B cell (primary cell): ENCODE measurements at regions of chr5 and their contacts with region 1.

Region 1: GRCh38 chr5:134101686-134102439 is 12.6 kb upstream of the TCF7 start:
- DNase-seq: peak; percentile 82
- ATAC-seq: peak; percentile 53
- H3K4me3 ChIP-seq: no peak overlapping the region
- H3K4me3 Mint-ChIP-seq: peak overlapping the region; percentile 34
- H3K27ac ChIP-seq: peak overlapping the region; percentile 76 to 88
- H3K27ac Mint-ChIP-seq: peak overlapping the region; percentile 96
- H3K4me1 ChIP-seq: peaks cover 31 to 47% of the 10 kb centered on the region in 2 donors
- H3K4me1 Mint-ChIP-seq: peaks cover 46% of the 10 kb centered on the region
- H3K27me3 ChIP-seq: no peaks in the 10 kb centered on the region
- H3K27me3 Mint-ChIP-seq: no peaks in the 10 kb centered on the region
- CTCF ChIP-seq: peak; percentile 86

Region 2: GRCh38 chr5:133460172-133460758 is 641.6 kb before region 1 on chr5:
- CTCF ChIA-PET with region 1: no interaction called
- POLR2A ChIA-PET with region 1: no interaction called
- intact Hi-C with region 1: no loop called
- DNase-seq: peak; percentile 25
- ATAC-seq: no peak
- H3K4me3 ChIP-seq: no peak overlapping the region
- H3K4me3 Mint-ChIP-seq: no peak overlapping the region
- H3K27ac ChIP-seq: no peak overlapping the region
- H3K27ac Mint-ChIP-seq: no peak overlapping the region
- H3K4me1 ChIP-seq: no peaks in the 10 kb centered on the region
- H3K4me1 Mint-ChIP-seq: no peaks in the 10 kb centered on the region
- H3K27me3 ChIP-seq: no peaks in the 10 kb centered on the region
- H3K27me3 Mint-ChIP-seq: no peaks in the 10 kb centered on the region
- CTCF ChIP-seq: peak; percentile 55

Region 3: GRCh38 chr5:134004592-134005375 is 97.1 kb before region 1 on chr5 and contains the start of gene VDAC1:
- CTCF ChIA-PET with region 1: interaction called, 4 read pairs
- POLR2A ChIA-PET with region 1: interaction called, 3 read pairs
- intact Hi-C with region 1: loop called (anchors 1 kb)
- DNase-seq: peak; percentile 91
- ATAC-seq: peak; percentile 85
- H3K4me3 ChIP-seq: peak within 1 kb of the TSS; percentile 61 to 87 (median 82)
- H3K4me3 Mint-ChIP-seq: peak within 1 kb of the TSS; percentile 95
- H3K27ac ChIP-seq: peak within 1 kb of the TSS; percentile 74 to 95
- H3K27ac Mint-ChIP-seq: peak within 1 kb of the TSS; percentile 95
- H3K4me1 ChIP-seq: peaks cover 17 to 33% of the 10 kb centered on the region in 2 donors
- H3K4me1 Mint-ChIP-seq: peaks cover 44% of the 10 kb centered on the region
- H3K27me3 ChIP-seq: no peaks in the 10 kb centered on the region
- H3K27me3 Mint-ChIP-seq: no peaks in the 10 kb centered on the region
- CTCF ChIP-seq: no peak
- total RNA-seq, gene VDAC1: 60.7 and 63.4 TPM in 2 replicates

Region 4: DNA sequence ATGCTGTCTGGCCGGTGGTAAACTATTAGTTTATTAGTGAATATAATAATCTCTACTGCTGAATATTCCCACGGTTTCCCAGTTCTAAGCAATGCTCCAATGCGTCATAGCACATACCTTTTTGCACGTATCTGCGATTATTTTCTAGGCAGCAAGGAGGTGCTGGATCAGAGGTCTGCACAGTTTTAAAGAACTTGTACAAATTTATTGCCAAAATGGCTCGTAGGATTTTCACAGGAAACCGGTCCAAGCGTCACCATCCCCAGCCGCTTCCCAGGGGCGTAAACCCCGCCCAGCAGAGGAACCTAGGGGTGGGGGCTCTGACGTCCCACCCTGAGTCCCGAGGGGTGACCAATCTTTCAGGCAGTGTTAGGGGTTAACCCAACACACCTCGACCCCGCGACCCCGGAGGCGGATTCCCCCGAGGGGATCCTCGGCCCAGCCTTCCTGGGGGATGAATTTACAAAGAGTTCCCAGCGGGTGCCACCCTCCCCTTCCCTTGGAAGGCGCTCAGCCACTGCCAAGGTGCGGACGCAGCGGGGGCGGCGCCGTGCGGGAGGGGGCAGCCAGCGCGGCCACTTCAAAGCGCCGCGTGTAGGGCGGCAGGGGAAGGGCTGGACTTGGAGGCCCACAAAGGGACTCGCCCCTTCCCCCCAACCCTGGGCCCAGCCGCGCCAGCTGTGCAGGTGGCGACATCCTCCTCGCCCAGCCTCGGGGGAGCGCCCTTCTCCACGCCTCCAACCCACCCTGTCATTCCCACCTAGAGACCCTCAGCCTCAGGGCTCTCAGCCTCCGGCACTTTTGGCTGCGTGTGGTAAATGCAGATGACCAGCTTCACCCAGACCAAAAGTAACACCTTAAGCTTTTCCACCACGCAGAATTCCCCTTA is 30.9 kb before region 1 on chr5:
- CTCF ChIA-PET with region 1: interaction called, 16 read pairs
- POLR2A ChIA-PET with region 1: interaction called, 4 read pairs
- intact Hi-C with region 1: no loop called
- DNase-seq: peak; percentile 36
- ATAC-seq: peak; percentile 33
- H3K4me3 ChIP-seq: peak overlapping the region in 4 of 5 experiments; percentile 26 to 56 (median 38)
- H3K4me3 Mint-ChIP-seq: peak overlapping the region; percentile 81
- H3K27ac ChIP-seq: no peak overlapping the region
- H3K27ac Mint-ChIP-seq: peak overlapping the region; percentile 60
- H3K4me1 ChIP-seq: peaks cover 12 to 13% of the 10 kb centered on the region in 2 donors
- H3K4me1 Mint-ChIP-seq: peaks cover 5% of the 10 kb centered on the region
- H3K27me3 ChIP-seq: peaks cover 0 to 31% (median 12%) of the 10 kb centered on the region in 4 experiments
- H3K27me3 Mint-ChIP-seq: peaks cover 32% of the 10 kb centered on the region
- CTCF ChIP-seq: no peak

Region 5: GRCh38 chr5:134113902-134114875 is 12.3 kb after region 1 on chr5 and contains the start of gene TCF7:
- CTCF ChIA-PET with region 1: interaction called, 84 read pairs
- POLR2A ChIA-PET with region 1: no interaction called
- intact Hi-C with region 1: loop called (anchors 1 kb)
- DNase-seq: peak; percentile 86
- ATAC-seq: peak; percentile 89
- H3K4me3 ChIP-seq: peak within 1 kb of the TSS; percentile 64 to 84 (median 82)
- H3K4me3 Mint-ChIP-seq: peak within 1 kb of the TSS; percentile 90
- H3K27ac ChIP-seq: peak within 1 kb of the TSS in 1 of 2 donors; percentile 36
- H3K27ac Mint-ChIP-seq: peak within 1 kb of the TSS; percentile 78
- H3K4me1 ChIP-seq: peaks cover 13 to 32% of the 10 kb centered on the region in 2 donors
- H3K4me1 Mint-ChIP-seq: peaks cover 19% of the 10 kb centered on the region
- H3K27me3 ChIP-seq: peaks cover 0 to 38% (median 16%) of the 10 kb centered on the region in 4 experiments
- H3K27me3 Mint-ChIP-seq: peaks cover 14% of the 10 kb centered on the region
- CTCF ChIP-seq: no peak
- total RNA-seq, gene TCF7: 58.8 and 61.1 TPM in 2 replicates

Region 6: DNA sequence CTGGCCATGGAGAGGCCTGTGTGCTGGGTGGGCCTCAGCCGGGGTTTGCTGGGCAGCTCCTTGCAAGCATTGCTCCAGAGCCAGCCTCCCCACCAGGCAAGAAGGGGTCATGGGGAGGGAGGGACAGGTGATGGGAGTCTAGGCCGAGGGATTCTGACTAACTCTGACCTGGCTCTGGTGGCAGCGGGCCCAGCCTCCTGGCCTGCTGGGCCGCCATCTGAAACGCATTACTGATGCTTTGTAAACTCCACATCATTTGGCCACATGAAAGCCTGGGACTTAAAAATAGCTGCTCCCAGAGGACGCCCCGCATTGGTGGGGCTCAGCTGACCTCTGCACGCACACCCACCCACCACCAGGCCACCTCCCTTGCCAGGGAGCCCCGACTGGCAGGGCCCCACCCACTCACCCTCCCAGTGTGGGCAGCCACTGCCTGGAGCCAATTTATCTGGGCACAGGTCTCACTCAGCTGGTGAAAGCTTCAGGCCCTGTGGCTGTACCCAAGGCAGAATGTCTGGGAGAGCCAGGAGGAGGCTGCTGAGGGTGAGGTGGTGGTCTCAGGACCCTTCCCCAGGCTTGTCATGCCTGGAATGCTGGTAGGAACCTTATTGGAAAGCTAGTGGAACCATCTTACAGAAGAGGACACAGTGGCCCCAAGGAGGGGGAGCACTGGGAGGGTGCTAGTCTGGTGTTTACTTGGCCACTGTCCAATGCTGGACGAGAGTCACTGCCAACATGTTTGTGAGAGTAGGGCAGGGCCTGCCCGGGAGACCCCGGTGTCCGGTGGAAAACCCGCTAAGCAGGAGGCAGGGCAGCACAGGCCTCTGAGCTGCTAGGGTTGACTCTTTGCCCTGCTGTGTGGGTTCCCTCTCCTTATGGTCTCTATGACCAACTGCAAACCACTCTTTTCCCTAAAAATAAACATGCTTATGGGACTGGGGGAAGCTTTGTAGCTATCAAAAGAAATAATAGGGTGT is 23.5 kb after region 1 on chr5:
- CTCF ChIA-PET with region 1: interaction called, 10 read pairs
- POLR2A ChIA-PET with region 1: interaction called, 9 read pairs
- intact Hi-C with region 1: no loop called
- DNase-seq: no peak
- ATAC-seq: no peak
- H3K4me3 ChIP-seq: no peak overlapping the region
- H3K4me3 Mint-ChIP-seq: no peak overlapping the region
- H3K27ac ChIP-seq: peak overlapping the region; percentile 28 to 55
- H3K27ac Mint-ChIP-seq: peak overlapping the region; percentile 59
- H3K4me1 ChIP-seq: peaks cover 33 to 72% of the 10 kb centered on the region in 2 donors
- H3K4me1 Mint-ChIP-seq: peaks cover 54% of the 10 kb centered on the region
- H3K27me3 ChIP-seq: no peaks in the 10 kb centered on the region
- H3K27me3 Mint-ChIP-seq: no peaks in the 10 kb centered on the region
- CTCF ChIP-seq: no peak

Region 7: GRCh38 chr5:134140530-134141201 is 38.8 kb after region 1 on chr5:
- CTCF ChIA-PET with region 1: no interaction called
- POLR2A ChIA-PET with region 1: interaction called, 16 read pairs
- intact Hi-C with region 1: loop called (anchors 1 kb)
- DNase-seq: peak; percentile 77
- ATAC-seq: peak; percentile 73
- H3K4me3 ChIP-seq: no peak overlapping the region
- H3K4me3 Mint-ChIP-seq: no peak overlapping the region
- H3K27ac ChIP-seq: no peak overlapping the region
- H3K27ac Mint-ChIP-seq: peak overlapping the region; percentile 69
- H3K4me1 ChIP-seq: peaks cover 5 to 34% of the 10 kb centered on the region in 2 donors
- H3K4me1 Mint-ChIP-seq: peaks cover 33% of the 10 kb centered on the region
- H3K27me3 ChIP-seq: no peaks in the 10 kb centered on the region
- H3K27me3 Mint-ChIP-seq: no peaks in the 10 kb centered on the region
- CTCF ChIP-seq: peak; percentile 89

Region 8: DNA sequence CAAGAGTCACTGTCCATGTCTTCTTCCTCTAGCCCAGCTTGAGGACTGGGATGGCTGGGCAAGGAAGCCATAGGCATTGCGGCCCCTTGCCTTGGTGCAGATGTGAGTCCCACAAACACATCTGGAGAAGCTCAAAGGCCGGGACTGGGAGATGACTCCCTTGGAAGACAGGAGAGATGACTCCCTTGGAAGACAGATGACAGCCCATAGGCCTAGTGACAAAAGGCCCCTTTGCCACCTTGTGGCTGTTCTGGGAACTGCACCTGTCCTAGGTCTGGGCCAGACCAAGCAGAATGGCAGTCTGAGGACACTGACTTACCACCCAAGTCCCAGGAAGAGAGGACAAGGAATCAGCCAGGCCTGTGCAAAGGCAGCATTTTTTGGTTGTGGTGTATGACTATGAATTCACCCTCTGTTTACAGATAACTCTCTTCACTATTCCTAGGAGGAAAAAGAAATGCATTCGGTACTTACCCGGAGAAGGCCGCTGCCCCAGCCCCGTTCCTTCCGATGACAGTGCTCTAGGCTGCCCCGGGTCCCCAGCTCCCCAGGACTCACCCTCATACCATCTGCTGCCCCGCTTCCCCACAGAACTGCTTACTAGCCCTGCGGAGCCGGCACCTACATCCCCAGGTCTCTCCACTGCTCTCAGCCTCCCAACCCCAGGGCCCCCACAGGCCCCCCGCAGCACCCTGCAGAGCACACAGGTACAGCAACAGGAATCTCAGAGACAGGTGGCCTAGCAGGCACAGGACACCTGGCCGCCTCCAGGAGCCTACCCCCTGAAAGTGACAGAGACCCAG is 44.1 kb after region 1 on chr5:
- CTCF ChIA-PET with region 1: no interaction called
- POLR2A ChIA-PET with region 1: interaction called, 16 read pairs
- intact Hi-C with region 1: loop called (anchors 1 kb)
- DNase-seq: peak; percentile 85
- ATAC-seq: peak; percentile 89
- H3K4me3 ChIP-seq: no peak overlapping the region
- H3K4me3 Mint-ChIP-seq: no peak overlapping the region
- H3K27ac ChIP-seq: no peak overlapping the region
- H3K27ac Mint-ChIP-seq: peak overlapping the region; percentile 11
- H3K4me1 ChIP-seq: no peaks in the 10 kb centered on the region
- H3K4me1 Mint-ChIP-seq: peaks cover 7% of the 10 kb centered on the region
- H3K27me3 ChIP-seq: no peaks in the 10 kb centered on the region
- H3K27me3 Mint-ChIP-seq: no peaks in the 10 kb centered on the region
- CTCF ChIP-seq: peak; percentile 96

Region 9: DNA sequence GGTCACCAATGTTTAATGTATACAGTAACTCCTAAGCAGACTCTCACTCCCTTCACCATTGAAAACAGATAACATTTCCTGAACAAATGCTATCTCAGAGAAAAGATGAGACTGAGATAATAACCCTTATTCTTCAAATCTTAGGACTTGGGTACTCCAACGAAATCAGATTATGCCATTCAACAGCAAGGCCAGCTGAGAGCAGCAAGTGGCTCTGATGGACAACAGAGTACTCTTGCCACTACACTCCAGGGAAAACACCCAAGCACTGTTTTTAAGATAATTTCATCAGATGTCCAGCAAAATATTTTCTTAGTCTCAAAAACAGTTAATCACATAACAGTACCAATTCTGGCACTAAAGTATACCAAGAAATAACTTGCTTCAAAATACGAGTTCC is 113.9 kb after region 1 on chr5:
- CTCF ChIA-PET with region 1: no interaction called
- POLR2A ChIA-PET with region 1: no interaction called
- intact Hi-C with region 1: no loop called
- DNase-seq: no peak
- ATAC-seq: no peak
- H3K4me3 ChIP-seq: no peak overlapping the region
- H3K4me3 Mint-ChIP-seq: no peak overlapping the region
- H3K27ac ChIP-seq: no peak overlapping the region
- H3K27ac Mint-ChIP-seq: no peak overlapping the region
- H3K4me1 ChIP-seq: peaks cover 32 to 36% of the 10 kb centered on the region in 2 donors
- H3K4me1 Mint-ChIP-seq: peaks cover 71% of the 10 kb centered on the region
- H3K27me3 ChIP-seq: no peaks in the 10 kb centered on the region
- H3K27me3 Mint-ChIP-seq: no peaks in the 10 kb centered on the region
- CTCF ChIP-seq: no peak